Breast epithelium (tissue), 4 donors: ENCODE measurements at regions of chr12 and their contacts with region 1.

Region 1: GRCh38 chr12:53352331-53353256 is 16.4 kb upstream of the SP7 start:
- DNase-seq: peak; percentile 78 to 81
- H3K4me3 ChIP-seq: no peak overlapping the region
- H3K27ac ChIP-seq: no peak overlapping the region
- H3K4me1 ChIP-seq: no peaks in the 10 kb centered on the region
- H3K27me3 ChIP-seq: no peaks in the 10 kb centered on the region
- CTCF ChIP-seq: peak; percentile 90 to 94 (median 94)
- POLR2A ChIP-seq: no peak

Region 2: DNA sequence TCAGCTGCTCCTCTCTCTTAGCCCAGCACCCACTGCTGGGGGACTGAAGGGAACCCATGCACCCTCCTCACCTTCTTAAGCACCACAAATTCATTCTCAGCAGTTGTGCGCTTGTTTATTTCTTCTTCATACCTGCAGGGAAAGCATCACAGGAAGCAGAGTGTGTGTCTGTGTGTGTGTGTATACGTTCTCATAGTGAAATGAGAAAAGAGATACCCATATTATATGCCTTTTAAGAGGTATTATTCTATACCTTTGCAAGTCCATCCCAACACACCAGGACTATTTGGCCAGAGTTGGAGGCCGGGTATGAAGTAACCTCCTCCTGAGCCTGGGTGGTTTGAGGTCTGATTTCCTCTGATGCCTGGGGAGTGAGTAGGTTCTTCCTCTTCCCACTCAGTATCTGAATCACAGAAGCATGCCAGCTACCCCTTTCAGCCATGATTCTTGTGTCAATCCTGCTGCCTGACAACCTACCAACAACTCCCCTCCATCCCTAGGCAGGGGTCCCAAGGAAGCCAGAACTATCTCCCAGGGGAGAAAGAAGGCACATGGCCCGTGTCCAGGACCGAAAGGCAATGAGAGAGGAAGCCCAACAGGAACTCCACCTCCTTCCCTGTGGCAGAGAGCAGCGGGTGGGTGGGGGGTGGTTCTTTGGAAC is 737.3 kb before region 1 on chr12:
- intact Hi-C with region 1: no loop called
- DNase-seq: no peak
- H3K4me3 ChIP-seq: no peak overlapping the region
- H3K27ac ChIP-seq: no peak overlapping the region
- H3K4me1 ChIP-seq: no peaks in the 10 kb centered on the region
- H3K27me3 ChIP-seq: peaks cover 0 to 6% of the 10 kb centered on the region in 2 donors
- CTCF ChIP-seq: no peak
- POLR2A ChIP-seq: no peak

Region 3: DNA sequence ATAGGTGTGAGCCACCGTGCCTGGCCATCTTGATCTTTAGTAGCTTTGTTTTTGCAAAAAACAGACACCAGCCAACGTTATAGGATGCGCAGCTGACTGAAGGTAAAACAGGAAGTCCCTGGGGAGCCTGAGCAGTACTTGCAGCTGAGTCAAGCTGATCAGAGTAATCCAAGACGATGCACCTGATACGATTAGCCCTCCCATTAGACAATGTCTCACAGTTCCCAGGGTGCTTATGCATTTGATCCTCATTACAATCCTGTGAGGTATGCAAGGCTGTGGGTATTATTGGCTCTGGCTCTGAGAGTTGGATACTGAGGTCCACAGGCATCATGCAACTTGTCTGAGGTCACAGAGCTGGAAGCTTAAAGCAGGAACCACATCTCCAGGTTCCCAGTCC is 395.6 kb before region 1 on chr12:
- intact Hi-C with region 1: loop called (anchors 5 kb)
- DNase-seq: no peak
- H3K4me3 ChIP-seq: no peak overlapping the region
- H3K27ac ChIP-seq: no peak overlapping the region
- H3K4me1 ChIP-seq: no peaks in the 10 kb centered on the region
- H3K27me3 ChIP-seq: no peaks in the 10 kb centered on the region
- CTCF ChIP-seq: no peak
- POLR2A ChIP-seq: no peak

Region 4: GRCh38 chr12:53336181-53336681 is 16.4 kb before region 1 on chr12 and contains the start of gene SP7:
- intact Hi-C with region 1: no loop called
- DNase-seq: no peak
- H3K4me3 ChIP-seq: no peak within 1 kb of the TSS
- H3K27ac ChIP-seq: no peak within 1 kb of the TSS
- H3K4me1 ChIP-seq: no peaks in the 10 kb centered on the region
- H3K27me3 ChIP-seq: peaks cover 0 to 23% of the 10 kb centered on the region in 2 donors
- CTCF ChIP-seq: no peak
- POLR2A ChIP-seq: no peak
- total RNA-seq, gene SP7: not detected

Region 5: GRCh38 chr12:53424626-53425514 is 72.3 kb after region 1 on chr12:
- intact Hi-C with region 1: loop called (anchors 5 kb)
- DNase-seq: no peak
- H3K4me3 ChIP-seq: no peak overlapping the region
- H3K27ac ChIP-seq: no peak overlapping the region
- H3K4me1 ChIP-seq: peaks cover 0 to 3% of the 10 kb centered on the region in 2 donors
- H3K27me3 ChIP-seq: no peaks in the 10 kb centered on the region
- CTCF ChIP-seq: no peak
- POLR2A ChIP-seq: no peak

Region 6: GRCh38 chr12:54005853-54006686 is 653.5 kb after region 1 on chr12:
- intact Hi-C with region 1: no loop called
- DNase-seq: peak; percentile 77 to 91
- H3K4me3 ChIP-seq: peak overlapping the region; percentile 35 to 71 (median 57)
- H3K27ac ChIP-seq: peak overlapping the region; percentile 48 to 81
- H3K4me1 ChIP-seq: peaks cover 0 to 7% of the 10 kb centered on the region in 2 donors
- H3K27me3 ChIP-seq: peaks cover 0 to 3% of the 10 kb centered on the region in 2 donors
- CTCF ChIP-seq: peak; percentile 90 to 98 (median 97)
- POLR2A ChIP-seq: no peak